ENCODE measurements at regions of chr4 and their contacts with region 1.

Region 1: GRCh38 chr4:176340871-176341685 is 21.3 kb downstream of the SPCS3 start:
- DNase-seq: peak; percentile 42
- CTCF ChIP-seq: peak; percentile 23

Region 2: DNA sequence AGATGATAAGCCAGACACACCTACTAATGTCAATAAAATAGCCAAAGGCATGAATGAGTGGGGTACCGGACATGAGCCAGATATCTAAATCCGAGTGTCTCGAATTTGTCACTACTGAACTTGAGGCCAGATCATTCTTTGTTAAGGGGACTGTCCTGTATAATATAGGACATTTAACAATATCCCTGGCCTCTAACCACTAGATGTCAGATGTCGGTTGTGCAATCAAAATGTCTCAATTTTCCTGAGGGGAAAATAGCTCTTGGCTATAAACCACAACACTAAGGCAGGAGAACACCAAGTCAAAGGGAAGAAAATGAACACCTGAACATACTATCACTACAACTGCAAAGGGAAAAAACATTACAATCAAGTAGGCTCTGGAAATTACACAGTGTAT is 683.5 kb before region 1 on chr4:
- in situ Hi-C with region 1: no loop called
- DNase-seq: no peak
- CTCF ChIP-seq: no peak

Region 3: DNA sequence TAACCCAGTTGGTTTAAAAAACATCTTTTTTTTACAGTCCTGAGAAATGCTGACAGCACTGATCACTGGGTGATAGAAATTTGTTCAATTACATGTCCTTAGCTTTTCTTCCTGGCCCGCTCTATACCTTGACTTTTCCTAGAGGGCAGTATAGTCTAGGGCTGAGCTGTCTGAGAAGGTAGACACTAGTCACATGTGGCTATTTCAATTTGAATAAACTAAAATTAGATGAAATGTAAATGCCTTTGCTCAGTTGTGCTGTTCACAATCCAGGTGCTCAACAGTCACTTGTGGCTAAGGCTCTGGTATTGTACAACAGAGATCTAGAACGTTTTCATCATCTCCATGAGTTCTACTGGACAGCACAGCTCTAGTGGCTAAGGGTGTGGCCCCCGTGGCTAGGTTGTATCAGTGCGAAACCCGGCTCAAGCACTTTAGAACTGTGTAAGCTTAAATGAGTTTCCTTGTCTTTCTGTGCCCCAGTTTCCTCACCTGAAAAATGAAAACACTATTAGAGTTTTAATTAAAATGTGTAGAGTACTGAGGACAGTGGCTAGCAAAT is 387.0 kb before region 1 on chr4:
- in situ Hi-C with region 1: loop called (anchors 25 kb)
- DNase-seq: peak; percentile 35
- CTCF ChIP-seq: no peak